K562 (cell line): ENCODE measurements at regions of chr6 and their contacts with region 1.

Region 1: DNA sequence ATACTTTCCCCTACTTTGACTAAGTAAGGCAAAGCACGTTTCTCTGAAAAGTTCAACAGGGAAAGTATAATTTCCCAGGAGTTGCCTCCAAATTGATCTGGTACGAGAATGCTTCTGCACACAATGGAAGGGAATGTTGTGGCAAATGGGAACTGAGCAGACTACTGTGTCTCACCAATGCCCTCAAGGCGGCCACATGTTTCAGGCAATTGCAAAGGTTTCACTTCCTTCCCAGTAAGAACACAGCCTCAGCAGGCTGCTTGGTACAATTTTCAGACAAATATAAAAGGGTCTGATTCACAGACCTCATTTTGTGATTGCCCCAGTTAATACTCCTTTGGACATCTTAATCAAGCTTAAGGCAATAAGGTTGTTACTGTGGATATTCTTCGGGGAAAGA is 71.2 kb downstream of the KIAA0319 start:
- DNase-seq: no peak
- ATAC-seq: peak; percentile 54; the same call in 2 of the 3 replicates
- H3K4me3 ChIP-seq: no peak overlapping the region
- H3K27ac ChIP-seq: no peak overlapping the region
- H3K4me1 ChIP-seq: no peaks in the 10 kb centered on the region
- H3K27me3 ChIP-seq: peaks cover 35 to 39% of the 10 kb centered on the region in 2 experiments
- CTCF ChIP-seq: no peak
- EP300 ChIP-seq: no peak
- POLR2A ChIP-seq: no peak
- RAD21 ChIP-seq: no peak

Region 2: DNA sequence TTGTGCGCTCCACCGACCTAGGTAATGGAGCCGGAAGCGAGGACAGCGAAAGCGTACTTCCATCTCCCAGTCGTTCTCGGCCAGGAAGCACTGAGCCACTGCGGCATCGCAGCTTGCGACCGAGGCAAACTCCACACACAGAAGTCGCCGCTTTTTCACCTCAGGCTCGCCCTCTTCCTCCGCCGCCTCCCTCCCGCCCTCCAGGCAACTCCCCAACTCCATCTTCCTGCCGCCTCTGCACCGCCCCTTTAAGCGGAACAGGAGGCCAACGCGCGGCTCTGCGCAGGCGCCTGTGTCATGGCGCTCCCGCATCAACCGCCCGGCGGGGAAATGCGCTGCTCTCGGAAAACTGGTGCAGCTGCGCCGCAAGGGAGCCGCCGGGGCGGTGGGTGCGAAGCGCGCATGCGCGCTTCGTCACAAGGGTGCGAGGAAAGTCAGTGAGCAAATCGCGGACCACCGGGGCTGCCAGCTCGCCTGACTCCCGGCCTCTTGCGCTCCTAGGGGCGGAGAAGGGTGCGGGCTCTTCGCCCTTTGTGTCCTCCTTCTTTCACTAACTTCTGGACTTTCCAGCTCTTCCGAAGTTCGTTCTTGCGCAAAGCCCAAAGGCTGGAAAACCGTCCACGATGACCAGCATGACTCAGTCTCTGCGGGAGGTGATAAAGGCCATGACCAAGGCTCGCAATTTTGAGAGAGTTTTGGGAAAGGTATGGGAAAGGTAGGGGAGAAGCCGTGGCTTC is 92.0 kb after region 1 on chr6 and contains the starts of genes ACOT13 and TDP2:
- CTCF ChIA-PET with region 1: no interaction called
- POLR2A ChIA-PET with region 1: no interaction called
- in situ Hi-C with region 1: no loop called
- intact Hi-C with region 1: no loop called
- DNase-seq: peak; percentile 97 to 100 (median 98)
- ATAC-seq: peak; percentile 91
- H3K4me3 ChIP-seq: peak within 1 kb of the TSS; percentile 63
- H3K27ac ChIP-seq: peak within 1 kb of the TSS; percentile 91
- H3K4me1 ChIP-seq: peaks cover 8 to 12% of the 10 kb centered on the region in 2 experiments; a peak in 4 of 5 replicates
- H3K27me3 ChIP-seq: no peaks in the 10 kb centered on the region
- CTCF ChIP-seq: peak; percentile 71 to 82 (median 79)
- EP300 ChIP-seq: peak; percentile 37
- POLR2A ChIP-seq: peak; percentile 94
- RAD21 ChIP-seq: peak; percentile 53 to 56; a peak in 3 of 4 replicates
- polyA plus RNA-seq, gene ACOT13: 106 to 127 TPM
- polyA plus RNA-seq, gene TDP2: 27.7 to 28.7 TPM

Region 3: GRCh38 chr6:24766680-24767462 is 192.1 kb after region 1 on chr6:
- CTCF ChIA-PET with region 1: no interaction called
- POLR2A ChIA-PET with region 1: no interaction called
- in situ Hi-C with region 1: loop called (anchors 10 kb)
- intact Hi-C with region 1: no loop called
- DNase-seq: no peak
- ATAC-seq: peak; percentile 59
- H3K4me3 ChIP-seq: no peak overlapping the region
- H3K27ac ChIP-seq: no peak overlapping the region
- H3K4me1 ChIP-seq: no peaks in the 10 kb centered on the region; a peak in 1 of 5 replicates
- H3K27me3 ChIP-seq: no peaks in the 10 kb centered on the region
- CTCF ChIP-seq: peak in 2 of 3 experiments; percentile 11 to 76; a peak in 2 of 6 replicates
- EP300 ChIP-seq: no peak
- POLR2A ChIP-seq: no peak
- RAD21 ChIP-seq: peak; percentile 77 to 78